PC-9 (cell line): ENCODE measurements at regions of chr3 and their contacts with region 1.

Region 1: DNA sequence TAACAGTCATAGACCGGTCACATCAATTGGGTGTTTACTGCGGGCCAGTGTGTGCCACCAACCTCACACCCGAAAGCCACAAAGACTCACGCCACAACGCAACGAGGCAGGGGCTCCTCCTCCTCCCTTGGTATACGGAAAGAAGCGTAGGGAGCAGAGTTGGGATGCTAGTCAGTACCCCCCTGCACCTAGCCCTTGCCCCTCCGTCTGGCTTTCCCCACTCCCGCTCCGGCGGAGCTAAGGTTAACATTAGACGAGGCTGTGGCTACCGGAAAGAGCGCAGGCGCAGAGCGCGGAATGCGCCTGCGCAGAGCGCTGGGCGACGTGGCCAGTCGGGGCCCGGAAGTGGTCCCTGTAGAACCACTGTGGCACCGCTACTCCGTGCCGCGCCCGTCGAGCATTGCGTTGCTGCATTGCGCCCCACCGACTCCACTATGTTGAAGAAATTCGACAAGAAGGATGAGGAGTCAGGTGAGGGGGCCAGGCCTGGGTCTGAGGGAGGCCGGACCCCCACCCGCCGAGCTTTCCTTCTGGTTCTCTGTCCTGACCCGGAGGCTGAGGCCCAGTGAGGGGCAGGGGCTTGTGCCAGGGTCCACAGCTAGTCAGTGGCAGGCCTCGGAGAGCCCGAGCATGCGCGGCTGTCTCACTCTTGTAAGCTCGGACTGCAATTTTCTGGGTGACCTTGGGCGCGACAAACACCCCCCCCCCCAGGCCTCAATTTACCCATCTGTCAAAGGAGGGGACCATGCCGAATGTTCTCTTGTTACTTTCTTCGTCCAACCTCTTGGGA is at the start of gene COPG1:
- DNase-seq: peak; percentile 73 to 92
- H3K4me3 ChIP-seq: peak within 1 kb of the TSS; percentile 88
- H3K27ac ChIP-seq: peak within 1 kb of the TSS; percentile 56
- H3K4me1 ChIP-seq: peaks cover 21% of the 10 kb centered on the region
- H3K27me3 ChIP-seq: no peaks in the 10 kb centered on the region
- CTCF ChIP-seq: no peak
- total RNA-seq, gene COPG1: 195 and 212 TPM in 2 replicates

Region 2: DNA sequence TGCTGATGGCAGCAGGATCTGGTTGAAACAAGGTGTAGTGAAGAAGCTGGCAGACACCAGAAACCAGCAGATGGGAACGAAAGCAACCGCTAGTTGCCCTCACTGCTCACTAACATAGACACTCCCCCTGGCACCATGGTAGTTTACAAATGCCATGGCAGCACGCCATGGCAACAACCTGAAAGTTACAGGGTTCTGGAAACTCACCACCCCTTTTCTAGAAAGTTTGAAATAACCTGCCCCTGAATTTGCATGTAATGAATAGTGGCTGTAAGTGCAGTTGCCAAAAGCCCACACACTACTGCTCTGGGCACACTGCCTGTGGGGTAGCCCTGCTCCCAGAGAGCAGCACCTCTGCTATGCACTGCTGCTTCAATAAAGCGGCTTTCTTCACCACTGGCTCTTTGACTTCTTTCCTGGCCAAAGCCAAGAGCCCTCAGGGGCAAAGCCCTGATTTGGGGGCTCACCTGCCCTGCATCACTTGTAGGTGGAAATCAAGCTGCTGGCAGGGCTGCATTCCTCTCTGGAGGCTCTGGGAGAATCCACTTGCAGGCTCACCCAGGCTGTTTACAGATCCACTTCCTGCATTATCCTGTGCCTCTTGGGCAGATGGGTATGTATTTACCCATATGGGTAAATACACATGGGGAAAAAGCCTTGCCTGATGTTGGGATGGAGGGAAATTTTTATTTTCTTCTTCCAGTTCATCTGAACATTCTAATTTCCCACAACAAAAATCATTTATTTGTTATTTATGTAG is 190.8 kb before region 1 on chr3:
- CTCF ChIA-PET with region 1: interaction called, 9 read pairs
- POLR2A ChIA-PET with region 1: interaction called, 25 read pairs
- intact Hi-C with region 1: loop called (anchors 1 kb)
- DNase-seq: peak in 1 of 2 experiments; percentile 47
- H3K4me3 ChIP-seq: no peak overlapping the region
- H3K27ac ChIP-seq: no peak overlapping the region
- H3K4me1 ChIP-seq: no peaks in the 10 kb centered on the region
- H3K27me3 ChIP-seq: no peaks in the 10 kb centered on the region
- CTCF ChIP-seq: no peak

Region 3: DNA sequence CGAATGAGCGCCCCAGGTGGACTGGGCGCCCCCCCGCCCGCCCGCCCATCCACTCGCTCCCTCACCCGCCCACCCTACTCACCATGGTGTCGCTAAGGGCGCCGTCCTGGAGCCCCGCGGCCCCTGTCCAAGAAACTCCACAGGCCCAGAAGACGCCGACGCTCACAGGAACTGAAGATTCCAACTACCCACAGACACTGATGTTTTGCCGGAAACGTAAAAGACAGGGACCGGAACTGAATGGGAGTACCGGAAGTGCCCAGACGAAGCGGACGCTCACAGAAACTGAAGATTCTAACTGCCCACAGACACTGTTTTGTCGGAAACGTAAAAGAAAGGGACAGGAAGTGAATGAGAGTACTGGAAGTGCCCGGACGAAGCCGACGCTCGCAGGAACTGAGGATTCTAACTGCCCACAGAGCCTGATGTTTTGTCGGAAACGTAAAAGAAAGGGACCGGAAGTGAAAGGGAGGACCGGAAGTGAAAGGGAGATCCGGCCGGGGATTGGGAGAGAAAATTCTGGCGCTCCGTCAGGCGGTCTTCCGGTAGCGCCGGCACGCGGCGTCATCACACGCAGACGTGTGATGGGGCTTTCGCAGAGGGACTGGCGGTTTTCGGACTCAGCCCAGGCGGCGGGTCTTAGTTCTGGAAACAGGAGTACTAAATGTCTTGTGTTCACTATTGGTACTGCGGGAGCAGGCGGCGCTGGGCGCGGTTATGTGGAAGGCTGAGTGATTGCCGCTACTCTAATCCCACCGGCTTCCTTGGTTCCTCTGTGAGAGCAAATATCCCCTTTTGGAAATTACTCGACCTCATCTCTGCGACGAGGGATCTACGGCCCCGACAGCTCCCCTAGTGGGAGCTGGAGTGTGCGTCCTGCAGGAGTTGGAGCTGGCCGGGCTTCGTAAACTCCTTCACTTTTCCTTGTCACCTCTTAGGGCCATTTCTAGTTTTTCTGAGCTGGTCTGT is 88.3 kb before region 1 on chr3 and contains the start of gene ISY1:
- CTCF ChIA-PET with region 1: interaction called, 4 read pairs
- POLR2A ChIA-PET with region 1: interaction called, 6 read pairs
- intact Hi-C with region 1: loop called (anchors 1 kb)
- DNase-seq: peak; percentile 86 to 89
- H3K4me3 ChIP-seq: peak within 1 kb of the TSS; percentile 78
- H3K27ac ChIP-seq: peak within 1 kb of the TSS; percentile 88
- H3K4me1 ChIP-seq: peaks cover 21% of the 10 kb centered on the region
- H3K27me3 ChIP-seq: no peaks in the 10 kb centered on the region
- CTCF ChIP-seq: peak; percentile 84
- total RNA-seq, gene ISY1: 62.3 and 63.1 TPM in 2 replicates

Region 4: DNA sequence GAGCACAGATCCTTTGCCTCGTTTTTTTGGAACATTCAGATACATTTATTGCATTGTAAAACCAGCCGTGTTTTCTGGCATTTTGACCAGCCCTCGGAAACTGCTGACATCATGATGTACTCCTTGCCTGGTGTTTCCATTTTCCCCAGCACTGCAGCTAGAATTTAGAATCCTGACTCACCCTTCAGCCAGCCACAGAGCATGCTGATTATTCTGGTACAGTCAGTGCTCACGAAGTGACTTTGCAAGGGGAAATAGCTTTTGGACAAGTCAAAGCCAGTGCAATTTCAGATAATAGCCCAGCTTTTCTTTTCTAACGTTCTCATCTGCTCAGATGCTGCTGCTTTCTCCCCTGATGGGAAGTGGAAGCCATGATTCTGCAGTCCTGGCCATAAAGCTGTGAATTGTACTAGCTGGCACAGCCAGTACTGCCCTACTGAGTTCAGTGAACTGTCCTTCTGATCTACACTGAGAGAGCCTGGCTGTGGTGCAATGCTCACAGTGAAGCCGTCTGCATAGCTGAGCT is 53.7 kb before region 1 on chr3:
- CTCF ChIA-PET with region 1: interaction called, 21 read pairs
- POLR2A ChIA-PET with region 1: no interaction called
- intact Hi-C with region 1: loop called (anchors 1 kb)
- DNase-seq: peak; percentile 57 to 84
- H3K4me3 ChIP-seq: peak overlapping the region; percentile 10; the same call in 1 of the 2 replicates
- H3K27ac ChIP-seq: peak overlapping the region; percentile 71
- H3K4me1 ChIP-seq: peaks cover 32% of the 10 kb centered on the region
- H3K27me3 ChIP-seq: no peaks in the 10 kb centered on the region
- CTCF ChIP-seq: no peak

Region 5: GRCh38 chr3:129316131-129317013 is 66.9 kb after region 1 on chr3:
- CTCF ChIA-PET with region 1: no interaction called
- POLR2A ChIA-PET with region 1: interaction called, 10 read pairs
- intact Hi-C with region 1: no loop called
- DNase-seq: peak; percentile 53 to 90
- H3K4me3 ChIP-seq: peak overlapping the region; percentile 90
- H3K27ac ChIP-seq: peak overlapping the region; percentile 61
- H3K4me1 ChIP-seq: peaks cover 8% of the 10 kb centered on the region; the same call in 1 of the 2 replicates
- H3K27me3 ChIP-seq: no peaks in the 10 kb centered on the region
- CTCF ChIP-seq: peak; percentile 65